ENCODE measurements at regions of chr3 and their contacts with region 1.

Region 1: DNA sequence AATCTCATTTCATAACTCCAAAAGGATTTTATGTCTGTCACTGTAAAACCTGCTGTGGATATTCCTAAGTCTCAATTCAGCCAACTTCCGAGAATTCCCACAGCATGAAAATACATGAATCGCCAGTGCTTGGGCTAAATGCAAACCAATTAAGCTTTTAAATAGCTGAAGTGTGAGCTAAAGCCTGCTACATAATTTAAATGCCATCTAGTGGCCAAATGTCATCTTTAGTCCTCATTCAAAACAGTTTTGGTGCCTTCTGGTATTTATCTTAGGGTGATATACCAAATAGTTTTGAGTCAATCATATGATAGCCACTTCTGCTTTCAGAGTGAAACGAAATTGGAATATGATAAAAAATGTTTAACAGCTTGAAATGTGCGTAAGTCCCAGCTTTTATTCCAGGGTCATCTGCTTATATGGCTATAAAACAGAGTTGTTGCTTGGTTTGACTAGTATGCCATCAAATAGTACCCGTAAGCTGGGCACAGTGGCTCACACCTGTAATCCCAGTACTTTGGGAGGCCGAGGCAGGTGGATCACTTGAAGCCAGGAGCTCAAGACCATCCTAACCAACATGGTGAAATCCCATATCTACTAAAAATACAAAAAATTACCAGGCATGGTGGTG is 41.8 kb upstream of the CCNL1 start:
- DNase-seq: no peak
- H3K4me3 ChIP-seq: no peak overlapping the region
- H3K27me3 ChIP-seq: no peaks in the 10 kb centered on the region
- CTCF ChIP-seq: peak; percentile 54

Region 2: GRCh38 chr3:157159762-157160657 is 41.8 kb before region 1 on chr3 and contains the start of gene CCNL1:
- CTCF ChIA-PET with region 1: interaction called, 10 read pairs
- POLR2A ChIA-PET with region 1: no interaction called
- DNase-seq: peak; percentile 75
- H3K4me3 ChIP-seq: peak within 1 kb of the TSS; percentile 98
- H3K27me3 ChIP-seq: no peaks in the 10 kb centered on the region
- CTCF ChIP-seq: no peak
- polyA plus RNA-seq, gene CCNL1: 132 and 145 TPM in 2 replicates

Region 3: DNA sequence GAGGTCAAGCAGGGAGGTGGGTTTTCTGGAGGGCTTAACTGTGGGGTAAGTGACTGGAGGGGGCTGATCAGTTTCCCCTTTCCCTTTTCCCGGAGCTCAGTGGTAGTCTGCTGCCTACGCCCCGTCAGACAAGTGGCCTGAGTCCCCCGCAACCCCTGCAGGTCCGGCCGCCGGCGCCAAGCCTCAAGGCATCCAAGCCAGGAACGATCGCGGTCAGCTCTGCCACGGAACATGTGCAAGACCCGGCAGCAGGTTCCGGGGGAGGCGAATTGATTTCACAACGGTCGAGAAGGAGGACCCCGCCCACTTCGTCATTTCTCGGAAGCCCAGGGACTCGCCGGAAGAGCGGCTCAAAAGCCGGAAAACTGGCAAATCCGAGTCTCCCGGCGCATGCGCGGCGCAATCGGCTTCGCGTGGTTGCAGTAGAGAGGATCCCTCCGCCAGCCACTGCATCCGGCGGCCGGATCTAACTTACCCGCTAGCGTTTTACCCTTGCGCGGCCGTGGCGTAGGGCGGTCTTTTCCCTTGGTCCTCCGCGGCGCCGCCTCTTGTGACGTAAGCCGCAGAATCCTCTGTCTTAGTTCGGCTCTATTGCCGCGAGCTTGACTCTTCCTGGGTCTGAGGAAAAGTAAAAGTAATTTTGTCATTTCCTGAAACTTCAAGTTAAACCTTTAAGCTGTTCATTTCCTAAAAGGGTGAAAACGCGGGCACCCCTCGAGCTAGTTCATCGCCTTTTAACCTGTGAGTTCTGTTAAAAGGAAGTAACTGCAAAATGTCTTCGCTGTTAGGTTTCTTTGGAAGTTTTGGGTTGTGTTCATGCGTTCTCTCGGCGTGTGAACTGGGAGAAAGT is 26.9 kb before region 1 on chr3:
- CTCF ChIA-PET with region 1: interaction called, 10 read pairs
- POLR2A ChIA-PET with region 1: no interaction called
- DNase-seq: peak; percentile 99
- H3K4me3 ChIP-seq: peak overlapping the region; percentile 60
- H3K27me3 ChIP-seq: no peaks in the 10 kb centered on the region
- CTCF ChIP-seq: no peak

Region 4: GRCh38 chr3:157237886-157238285 is 36.1 kb after region 1 on chr3:
- CTCF ChIA-PET with region 1: interaction called, 11 read pairs
- POLR2A ChIA-PET with region 1: no interaction called
- DNase-seq: no peak
- H3K4me3 ChIP-seq: no peak overlapping the region
- H3K27me3 ChIP-seq: no peaks in the 10 kb centered on the region
- CTCF ChIP-seq: no peak

Region 5: GRCh38 chr3:157290766-157291165 is 89.0 kb after region 1 on chr3:
- CTCF ChIA-PET with region 1: no interaction called
- POLR2A ChIA-PET with region 1: no interaction called
- DNase-seq: peak; percentile 60
- H3K4me3 ChIP-seq: no peak overlapping the region
- H3K27me3 ChIP-seq: no peaks in the 10 kb centered on the region
- CTCF ChIP-seq: no peak

Region 6: DNA sequence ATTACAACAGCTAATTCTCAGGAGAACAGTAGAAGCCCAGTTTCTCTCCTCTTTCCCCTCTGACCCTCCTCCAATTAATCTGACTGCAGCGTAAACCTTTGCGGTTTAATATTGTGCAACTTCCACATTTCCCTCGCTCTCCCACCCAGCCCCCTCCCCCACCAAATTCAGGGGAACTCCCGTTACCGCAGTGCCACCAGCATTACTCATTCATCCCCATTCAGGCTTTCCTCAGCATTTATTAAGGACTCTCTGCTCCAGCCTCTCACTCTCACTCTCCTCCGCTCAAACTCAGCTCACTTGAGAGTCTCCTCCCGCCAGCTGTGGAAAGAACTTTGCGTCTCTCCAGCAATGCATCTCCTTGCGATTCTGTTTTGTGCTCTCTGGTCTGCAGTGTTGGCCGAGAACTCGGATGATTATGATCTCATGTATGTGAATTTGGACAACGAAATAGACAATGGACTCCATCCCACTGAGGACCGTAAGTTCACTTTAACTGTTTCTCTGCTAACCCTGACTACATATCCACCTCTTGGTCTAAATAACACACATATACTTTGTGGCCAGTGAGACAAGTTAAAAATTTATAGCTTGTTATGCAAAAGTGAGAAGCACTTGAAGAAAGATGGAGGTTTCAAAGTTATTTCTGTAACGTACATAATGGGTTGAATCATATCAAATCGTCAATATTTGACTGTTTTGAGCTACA is 235.0 kb after region 1 on chr3 and contains the start of gene PTX3:
- CTCF ChIA-PET with region 1: interaction called, 11 read pairs
- POLR2A ChIA-PET with region 1: no interaction called
- DNase-seq: peak; percentile 46
- H3K4me3 ChIP-seq: peak within 1 kb of the TSS; percentile 85
- H3K27me3 ChIP-seq: no peaks in the 10 kb centered on the region
- CTCF ChIP-seq: no peak
- polyA plus RNA-seq, gene PTX3: 60.8 and 120 TPM in 2 replicates

Region 7: GRCh38 chr3:157493627-157494550 is 292.1 kb after region 1 on chr3:
- CTCF ChIA-PET with region 1: interaction called, 62 read pairs
- POLR2A ChIA-PET with region 1: no interaction called
- DNase-seq: peak; percentile 46
- H3K4me3 ChIP-seq: no peak overlapping the region
- H3K27me3 ChIP-seq: no peaks in the 10 kb centered on the region
- CTCF ChIP-seq: peak; percentile 65

Measured in BJ (cell line).